Breast epithelium (tissue), 4 donors: ENCODE measurements at regions of chr1 and their contacts with region 1.

Region 1: GRCh38 chr1:19287436-19288185 is 959 bp downstream of the AKR7A3 start:
- DNase-seq: no peak
- H3K4me3 ChIP-seq: peak overlapping the region in 2 of 3 donors; percentile 54 to 61
- H3K27ac ChIP-seq: no peak overlapping the region
- H3K4me1 ChIP-seq: no peaks in the 10 kb centered on the region
- H3K27me3 ChIP-seq: no peaks in the 10 kb centered on the region
- CTCF ChIP-seq: no peak
- POLR2A ChIP-seq: no peak

Region 2: GRCh38 chr1:19251305-19252196 is 36.1 kb before region 1 on chr1 and contains the starts of genes EMC1 and MRTO4:
- intact Hi-C with region 1: no loop called
- DNase-seq: peak; percentile 66 to 80
- H3K4me3 ChIP-seq: peak within 1 kb of the TSS; percentile 74 to 95 (median 93)
- H3K27ac ChIP-seq: peak within 1 kb of the TSS; percentile 92 to 99
- H3K4me1 ChIP-seq: peaks cover 4 to 22% of the 10 kb centered on the region in 2 donors
- H3K27me3 ChIP-seq: no peaks in the 10 kb centered on the region
- CTCF ChIP-seq: no peak
- POLR2A ChIP-seq: no peak
- total RNA-seq, gene EMC1: 22.3 to 42.3 (median 32.3) TPM
- total RNA-seq, gene MRTO4: 18.9 to 35.4 (median 27.4) TPM

Region 3: GRCh38 chr1:19273106-19273843 is 14.3 kb before region 1 on chr1:
- intact Hi-C with region 1: no loop called
- DNase-seq: no peak
- H3K4me3 ChIP-seq: peak overlapping the region in 2 of 3 donors; percentile 25 to 31
- H3K27ac ChIP-seq: no peak overlapping the region
- H3K4me1 ChIP-seq: no peaks in the 10 kb centered on the region
- H3K27me3 ChIP-seq: no peaks in the 10 kb centered on the region
- CTCF ChIP-seq: no peak
- POLR2A ChIP-seq: no peak

Region 4: GRCh38 chr1:19728413-19729145 is 441.0 kb after region 1 on chr1:
- intact Hi-C with region 1: loop called (anchors 5 kb)
- DNase-seq: no peak
- H3K4me3 ChIP-seq: no peak overlapping the region
- H3K27ac ChIP-seq: no peak overlapping the region
- H3K4me1 ChIP-seq: no peaks in the 10 kb centered on the region
- H3K27me3 ChIP-seq: no peaks in the 10 kb centered on the region
- CTCF ChIP-seq: no peak
- POLR2A ChIP-seq: no peak